ENCODE measurements at regions of chrX and their contacts with region 1.

Region 1: DNA sequence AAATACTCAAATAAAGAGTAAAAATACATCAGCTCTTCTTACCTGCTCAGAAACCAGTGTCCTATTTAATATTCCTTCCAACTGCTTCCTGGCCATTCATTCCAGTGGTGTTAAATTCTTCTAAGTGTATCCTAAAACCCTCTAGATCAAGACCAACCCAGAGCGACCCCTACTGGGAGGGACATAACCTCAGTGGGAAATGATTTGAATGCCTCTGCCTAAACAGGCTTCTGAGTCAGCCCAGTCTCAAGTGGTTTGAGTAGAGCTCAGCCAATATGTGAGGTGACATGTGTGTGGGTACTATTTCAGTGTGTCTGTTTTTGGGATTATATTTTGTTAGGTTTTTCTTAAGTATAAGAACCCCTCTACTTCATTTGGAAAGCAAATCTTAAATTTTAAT is 133.6 kb upstream of the ARHGEF9 start:
- DNase-seq: peak; percentile 13
- H3K4me3 Mint-ChIP-seq: no peak overlapping the region
- H3K27ac Mint-ChIP-seq: peak overlapping the region; percentile 35
- H3K4me1 Mint-ChIP-seq: peaks cover 26% of the 10 kb centered on the region
- H3K27me3 Mint-ChIP-seq: no peaks in the 10 kb centered on the region
- CTCF ChIP-seq: no peak

Region 2: DNA sequence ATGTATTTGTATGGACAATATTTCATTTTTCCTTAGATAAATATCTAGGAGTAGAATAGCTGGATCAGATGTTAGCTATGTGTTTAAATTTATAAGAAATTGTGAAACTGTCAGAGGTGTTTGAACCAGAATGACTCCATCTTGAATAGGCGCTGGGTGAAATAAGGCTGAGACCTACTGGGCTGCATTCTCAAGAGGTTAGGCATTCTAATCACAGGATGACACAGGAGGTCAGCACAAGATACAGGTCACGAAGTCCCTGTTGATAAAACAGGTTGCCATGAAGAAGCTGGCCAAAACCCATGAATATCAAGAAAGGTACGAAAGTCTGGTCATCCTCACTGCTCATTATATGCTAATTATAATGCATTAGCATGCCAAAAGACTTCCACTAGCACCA is 531.2 kb before region 1 on chrX:
- CTCF ChIA-PET with region 1: no interaction called
- POLR2A ChIA-PET with region 1: no interaction called
- intact Hi-C with region 1: no loop called
- DNase-seq: no peak
- H3K4me3 Mint-ChIP-seq: no peak overlapping the region
- H3K27ac Mint-ChIP-seq: no peak overlapping the region
- H3K4me1 Mint-ChIP-seq: no peaks in the 10 kb centered on the region
- H3K27me3 Mint-ChIP-seq: no peaks in the 10 kb centered on the region
- CTCF ChIP-seq: no peak

Region 3: DNA sequence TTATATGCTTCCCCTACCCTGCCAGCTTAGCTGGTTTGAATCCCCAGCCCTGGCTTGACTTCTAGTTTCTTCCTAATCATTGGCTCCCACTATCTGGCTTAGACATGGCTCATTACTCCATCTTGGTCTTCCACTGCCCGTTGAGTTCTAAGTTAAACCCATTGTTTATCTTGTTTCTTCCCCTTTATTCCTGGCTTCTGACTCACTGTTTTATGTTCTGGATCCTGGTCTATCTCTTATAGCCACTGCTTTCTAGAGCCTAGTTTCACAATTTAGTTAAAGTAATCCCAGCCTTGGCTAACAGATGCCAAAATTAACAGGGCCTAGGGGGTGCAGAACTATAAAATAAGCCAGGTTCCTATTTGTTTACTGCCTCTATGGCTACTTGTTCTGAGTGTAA is 254.5 kb before region 1 on chrX:
- CTCF ChIA-PET with region 1: no interaction called
- POLR2A ChIA-PET with region 1: no interaction called
- intact Hi-C with region 1: no loop called
- DNase-seq: no peak
- H3K4me3 Mint-ChIP-seq: no peak overlapping the region
- H3K27ac Mint-ChIP-seq: no peak overlapping the region
- H3K4me1 Mint-ChIP-seq: no peaks in the 10 kb centered on the region
- H3K27me3 Mint-ChIP-seq: no peaks in the 10 kb centered on the region
- CTCF ChIP-seq: no peak

Region 4: GRCh38 chrX:63743596-63743995 is 175.0 kb before region 1 on chrX:
- CTCF ChIA-PET with region 1: no interaction called
- POLR2A ChIA-PET with region 1: no interaction called
- intact Hi-C with region 1: no loop called
- DNase-seq: no peak
- H3K4me3 Mint-ChIP-seq: no peak overlapping the region
- H3K27ac Mint-ChIP-seq: no peak overlapping the region
- H3K4me1 Mint-ChIP-seq: peaks cover 10% of the 10 kb centered on the region
- H3K27me3 Mint-ChIP-seq: no peaks in the 10 kb centered on the region
- CTCF ChIP-seq: no peak

Region 5: GRCh38 chrX:63754860-63755582 is 163.6 kb before region 1 on chrX:
- CTCF ChIA-PET with region 1: interaction called, 3 read pairs
- POLR2A ChIA-PET with region 1: interaction called, 11 read pairs
- intact Hi-C with region 1: no loop called
- DNase-seq: peak; percentile 87
- H3K4me3 Mint-ChIP-seq: peak overlapping the region; percentile 89
- H3K27ac Mint-ChIP-seq: peak overlapping the region; percentile 83
- H3K4me1 Mint-ChIP-seq: peaks cover 22% of the 10 kb centered on the region
- H3K27me3 Mint-ChIP-seq: no peaks in the 10 kb centered on the region
- CTCF ChIP-seq: no peak